B cell (primary cell): ENCODE measurements at regions of chr20 and their contacts with region 1.

Region 1: DNA sequence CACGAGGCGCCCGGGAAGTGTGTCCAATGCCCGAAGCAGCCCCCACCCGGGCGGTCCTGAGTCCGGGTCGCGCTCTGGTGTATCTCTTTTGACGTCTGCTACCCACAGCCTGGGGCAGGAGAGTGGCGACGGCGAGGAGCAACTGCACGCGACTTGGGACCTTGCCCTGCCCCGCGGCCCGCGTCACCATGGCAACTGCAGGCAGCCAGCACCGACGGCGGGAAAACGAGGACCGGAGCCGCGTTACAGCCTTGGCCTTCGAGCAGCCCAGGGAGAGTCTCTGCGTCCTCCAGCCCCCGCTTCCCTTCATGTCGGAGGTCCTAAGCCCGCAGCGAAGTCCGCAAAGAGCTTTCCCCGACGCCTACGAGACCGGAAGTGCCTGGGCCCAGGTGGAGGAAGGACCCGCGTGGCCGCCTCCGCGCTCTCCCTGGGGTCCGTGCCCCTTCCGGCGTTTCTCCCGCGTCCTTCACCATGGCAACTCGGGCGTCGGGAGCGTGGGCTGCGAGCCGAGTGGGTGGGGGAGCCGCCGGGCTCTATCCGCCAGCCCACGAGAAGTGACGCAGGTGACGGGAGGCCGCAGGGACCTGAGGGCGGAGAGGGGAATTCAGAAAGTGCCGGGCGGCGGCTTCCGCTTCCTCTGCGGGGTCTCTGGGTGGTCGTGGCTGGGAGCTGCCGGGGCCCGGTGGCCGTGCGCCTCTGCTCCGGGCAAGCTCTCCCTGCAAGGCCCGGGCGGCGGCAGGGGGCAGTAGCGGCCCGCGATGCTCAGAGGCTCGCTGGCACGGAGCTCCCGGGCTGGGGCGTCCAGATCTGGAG is 88.6 kb upstream of the TGM3 start:
- DNase-seq: peak; percentile 83
- ATAC-seq: peak; percentile 81
- H3K4me3 ChIP-seq: peak overlapping the region; percentile 16 to 73 (median 70)
- H3K4me3 Mint-ChIP-seq: peak overlapping the region; percentile 90
- H3K27ac ChIP-seq: peak overlapping the region in 1 of 2 donors; percentile 37
- H3K27ac Mint-ChIP-seq: peak overlapping the region; percentile 67
- H3K4me1 ChIP-seq: peaks cover 4 to 16% of the 10 kb centered on the region in 2 donors
- H3K4me1 Mint-ChIP-seq: peaks cover 22% of the 10 kb centered on the region
- H3K27me3 ChIP-seq: peaks cover 0 to 5% (median 0%) of the 10 kb centered on the region in 4 experiments
- H3K27me3 Mint-ChIP-seq: no peaks in the 10 kb centered on the region
- CTCF ChIP-seq: peak; percentile 86

Region 2: DNA sequence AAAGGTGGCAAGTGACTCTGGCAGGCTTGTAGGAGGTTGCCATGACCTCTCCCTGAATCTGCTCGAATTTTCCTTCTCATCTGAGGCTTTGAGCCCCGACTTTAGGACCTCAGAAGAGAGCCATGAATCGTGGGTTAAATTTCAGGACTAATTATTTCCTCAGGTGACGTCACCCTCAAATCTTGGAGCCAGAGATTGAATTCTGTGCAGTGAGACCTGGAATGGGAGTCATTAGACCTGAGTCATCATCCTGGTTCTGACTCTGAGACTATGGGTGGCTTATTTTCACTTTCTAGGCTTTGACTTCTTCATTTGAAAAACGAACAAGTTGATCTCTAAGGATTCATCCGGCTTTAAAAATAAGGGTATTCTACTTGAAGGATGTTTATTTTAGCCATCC is 164.8 kb before region 1 on chr20:
- CTCF ChIA-PET with region 1: no interaction called
- POLR2A ChIA-PET with region 1: no interaction called
- intact Hi-C with region 1: no loop called
- DNase-seq: no peak
- ATAC-seq: no peak
- H3K4me3 ChIP-seq: no peak overlapping the region
- H3K4me3 Mint-ChIP-seq: no peak overlapping the region
- H3K27ac ChIP-seq: no peak overlapping the region
- H3K27ac Mint-ChIP-seq: no peak overlapping the region
- H3K4me1 ChIP-seq: no peaks in the 10 kb centered on the region
- H3K4me1 Mint-ChIP-seq: no peaks in the 10 kb centered on the region
- H3K27me3 ChIP-seq: peaks cover 0 to 16% (median 1%) of the 10 kb centered on the region in 4 experiments
- H3K27me3 Mint-ChIP-seq: peaks cover 34% of the 10 kb centered on the region
- CTCF ChIP-seq: no peak

Region 3: DNA sequence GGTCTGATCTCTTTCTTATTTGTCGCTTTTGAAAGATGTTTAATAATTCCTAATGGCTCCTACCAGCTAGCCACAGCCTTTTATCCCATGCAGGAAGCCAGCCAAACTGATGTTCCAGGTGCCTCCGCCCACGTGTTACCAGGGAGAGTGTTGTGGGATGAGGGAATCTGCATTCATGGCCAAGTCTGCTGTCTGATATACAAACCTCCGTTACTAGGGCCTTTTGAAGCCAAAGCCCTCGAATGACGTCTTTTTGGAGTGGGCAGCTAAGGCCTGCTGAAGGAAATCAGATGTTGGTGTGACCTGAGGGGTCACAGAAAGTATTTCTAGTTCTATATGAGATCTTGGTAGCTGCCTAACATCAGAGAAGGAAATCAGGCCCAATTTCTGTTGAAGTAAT is 84.2 kb before region 1 on chr20:
- CTCF ChIA-PET with region 1: interaction called, 10 read pairs
- POLR2A ChIA-PET with region 1: no interaction called
- intact Hi-C with region 1: no loop called
- DNase-seq: no peak
- ATAC-seq: no peak
- H3K4me3 ChIP-seq: no peak overlapping the region
- H3K4me3 Mint-ChIP-seq: no peak overlapping the region
- H3K27ac ChIP-seq: no peak overlapping the region
- H3K27ac Mint-ChIP-seq: peak overlapping the region; percentile 12
- H3K4me1 ChIP-seq: peaks cover 22% of the 10 kb centered on the region in 2 donors
- H3K4me1 Mint-ChIP-seq: peaks cover 72% of the 10 kb centered on the region
- H3K27me3 ChIP-seq: no peaks in the 10 kb centered on the region
- H3K27me3 Mint-ChIP-seq: no peaks in the 10 kb centered on the region
- CTCF ChIP-seq: no peak

Region 4: DNA sequence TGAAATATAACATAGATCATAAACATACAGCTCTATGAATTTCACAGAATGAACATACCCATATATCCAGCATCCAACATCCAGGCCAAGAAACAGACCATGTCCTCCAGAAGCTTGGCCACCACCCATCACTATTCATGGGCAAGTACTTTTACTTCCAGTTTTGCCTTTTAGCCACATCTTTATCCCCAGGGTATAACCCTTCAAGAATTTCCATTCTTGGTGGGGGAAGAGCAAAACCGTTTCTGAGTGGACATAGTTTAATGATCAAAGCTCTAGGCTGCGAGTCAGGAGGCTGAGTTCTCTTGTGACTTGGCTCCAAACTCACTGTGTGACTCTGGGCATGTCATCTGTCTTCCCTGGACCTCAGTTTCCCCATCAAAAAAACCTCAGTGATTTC is 27.2 kb before region 1 on chr20:
- CTCF ChIA-PET with region 1: no interaction called
- POLR2A ChIA-PET with region 1: no interaction called
- intact Hi-C with region 1: no loop called
- DNase-seq: no peak
- ATAC-seq: no peak
- H3K4me3 ChIP-seq: no peak overlapping the region
- H3K4me3 Mint-ChIP-seq: no peak overlapping the region
- H3K27ac ChIP-seq: no peak overlapping the region
- H3K27ac Mint-ChIP-seq: no peak overlapping the region
- H3K4me1 ChIP-seq: no peaks in the 10 kb centered on the region
- H3K4me1 Mint-ChIP-seq: peaks cover 6% of the 10 kb centered on the region
- H3K27me3 ChIP-seq: peaks cover 0 to 5% (median 0%) of the 10 kb centered on the region in 4 experiments
- H3K27me3 Mint-ChIP-seq: peaks cover 27% of the 10 kb centered on the region
- CTCF ChIP-seq: no peak

Region 5: DNA sequence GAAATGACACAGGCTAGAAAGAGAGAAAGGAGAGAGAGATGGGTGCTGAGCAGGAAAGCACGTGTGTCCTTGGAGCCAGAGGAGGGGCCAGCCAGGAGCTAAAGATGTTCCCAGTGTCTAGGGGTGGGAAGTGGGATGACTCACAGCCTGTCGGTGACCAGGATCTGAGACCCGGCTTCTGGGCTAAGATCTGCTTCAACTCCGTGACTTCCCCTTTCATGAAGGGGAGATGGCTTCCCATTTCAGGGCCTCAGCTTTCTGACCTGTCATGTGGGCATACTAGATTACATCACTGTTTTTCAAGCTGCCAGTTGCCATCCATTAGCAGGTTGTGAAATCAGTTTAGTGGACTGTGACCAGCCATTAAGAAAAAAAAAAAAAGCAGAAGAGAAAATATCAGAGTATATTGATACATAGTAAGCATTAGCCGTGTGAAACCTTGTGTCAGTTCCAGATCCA is 94.0 kb after region 1 on chr20:
- CTCF ChIA-PET with region 1: interaction called, 27 read pairs
- POLR2A ChIA-PET with region 1: no interaction called
- intact Hi-C with region 1: no loop called
- DNase-seq: peak; percentile 89
- ATAC-seq: peak; percentile 95
- H3K4me3 ChIP-seq: peak overlapping the region in 2 of 5 experiments; percentile 2 to 27
- H3K4me3 Mint-ChIP-seq: peak overlapping the region; percentile 61
- H3K27ac ChIP-seq: peak overlapping the region; percentile 82 to 91
- H3K27ac Mint-ChIP-seq: peak overlapping the region; percentile 93
- H3K4me1 ChIP-seq: peaks cover 23 to 24% of the 10 kb centered on the region in 2 donors
- H3K4me1 Mint-ChIP-seq: peaks cover 22% of the 10 kb centered on the region
- H3K27me3 ChIP-seq: peaks cover 0 to 6% (median 0%) of the 10 kb centered on the region in 4 experiments
- H3K27me3 Mint-ChIP-seq: no peaks in the 10 kb centered on the region
- CTCF ChIP-seq: no peak

Region 6: DNA sequence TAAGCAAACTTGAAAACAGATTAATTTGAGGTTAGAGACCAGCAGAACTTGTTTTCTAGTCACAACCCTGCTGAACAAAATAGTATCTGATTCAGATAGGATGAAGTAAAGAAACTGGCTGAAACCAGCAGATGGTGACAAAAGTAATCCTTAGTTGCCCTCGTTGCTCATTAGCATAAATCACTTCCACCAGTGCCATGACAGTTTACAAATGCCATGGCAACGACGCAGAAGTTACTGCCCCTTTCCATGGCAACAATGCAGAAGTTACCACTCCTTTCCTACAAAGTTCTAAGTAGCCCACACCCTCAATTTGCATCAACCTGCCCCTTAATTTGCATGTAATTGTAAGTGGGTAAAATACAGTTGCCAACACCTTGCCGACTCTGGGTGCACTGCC is 239.7 kb after region 1 on chr20:
- CTCF ChIA-PET with region 1: interaction called, 104 read pairs
- POLR2A ChIA-PET with region 1: interaction called, 3 read pairs
- intact Hi-C with region 1: no loop called
- DNase-seq: no peak
- ATAC-seq: no peak
- H3K4me3 ChIP-seq: no peak overlapping the region
- H3K4me3 Mint-ChIP-seq: no peak overlapping the region
- H3K27ac ChIP-seq: no peak overlapping the region
- H3K27ac Mint-ChIP-seq: no peak overlapping the region
- H3K4me1 ChIP-seq: no peaks in the 10 kb centered on the region
- H3K4me1 Mint-ChIP-seq: no peaks in the 10 kb centered on the region
- H3K27me3 ChIP-seq: no peaks in the 10 kb centered on the region
- H3K27me3 Mint-ChIP-seq: peaks cover 4% of the 10 kb centered on the region
- CTCF ChIP-seq: no peak

Region 7: GRCh38 chr20:2523919-2524708 is 317.0 kb after region 1 on chr20:
- CTCF ChIA-PET with region 1: interaction called, 12 read pairs
- POLR2A ChIA-PET with region 1: no interaction called
- intact Hi-C with region 1: no loop called
- DNase-seq: peak; percentile 91
- ATAC-seq: peak; percentile 87
- H3K4me3 ChIP-seq: peak overlapping the region; percentile 52 to 94 (median 84)
- H3K4me3 Mint-ChIP-seq: peak overlapping the region; percentile 90
- H3K27ac ChIP-seq: peak overlapping the region; percentile 49 to 72
- H3K27ac Mint-ChIP-seq: peak overlapping the region; percentile 77
- H3K4me1 ChIP-seq: peaks cover 9 to 19% of the 10 kb centered on the region in 2 donors
- H3K4me1 Mint-ChIP-seq: peaks cover 12% of the 10 kb centered on the region
- H3K27me3 ChIP-seq: peaks cover 0 to 14% (median 3%) of the 10 kb centered on the region in 4 experiments
- H3K27me3 Mint-ChIP-seq: peaks cover 3% of the 10 kb centered on the region
- CTCF ChIP-seq: peak; percentile 97

Region 8: GRCh38 chr20:2535711-2536559 is 328.8 kb after region 1 on chr20:
- CTCF ChIA-PET with region 1: no interaction called
- POLR2A ChIA-PET with region 1: no interaction called
- intact Hi-C with region 1: no loop called
- DNase-seq: no peak
- ATAC-seq: no peak
- H3K4me3 ChIP-seq: no peak overlapping the region
- H3K4me3 Mint-ChIP-seq: no peak overlapping the region
- H3K27ac ChIP-seq: no peak overlapping the region
- H3K27ac Mint-ChIP-seq: no peak overlapping the region
- H3K4me1 ChIP-seq: no peaks in the 10 kb centered on the region
- H3K4me1 Mint-ChIP-seq: no peaks in the 10 kb centered on the region
- H3K27me3 ChIP-seq: peaks cover 0 to 19% (median 0%) of the 10 kb centered on the region in 4 experiments
- H3K27me3 Mint-ChIP-seq: peaks cover 43% of the 10 kb centered on the region
- CTCF ChIP-seq: no peak